ENCODE measurements at regions of chr20 and their contacts with region 1.

Region 1: DNA sequence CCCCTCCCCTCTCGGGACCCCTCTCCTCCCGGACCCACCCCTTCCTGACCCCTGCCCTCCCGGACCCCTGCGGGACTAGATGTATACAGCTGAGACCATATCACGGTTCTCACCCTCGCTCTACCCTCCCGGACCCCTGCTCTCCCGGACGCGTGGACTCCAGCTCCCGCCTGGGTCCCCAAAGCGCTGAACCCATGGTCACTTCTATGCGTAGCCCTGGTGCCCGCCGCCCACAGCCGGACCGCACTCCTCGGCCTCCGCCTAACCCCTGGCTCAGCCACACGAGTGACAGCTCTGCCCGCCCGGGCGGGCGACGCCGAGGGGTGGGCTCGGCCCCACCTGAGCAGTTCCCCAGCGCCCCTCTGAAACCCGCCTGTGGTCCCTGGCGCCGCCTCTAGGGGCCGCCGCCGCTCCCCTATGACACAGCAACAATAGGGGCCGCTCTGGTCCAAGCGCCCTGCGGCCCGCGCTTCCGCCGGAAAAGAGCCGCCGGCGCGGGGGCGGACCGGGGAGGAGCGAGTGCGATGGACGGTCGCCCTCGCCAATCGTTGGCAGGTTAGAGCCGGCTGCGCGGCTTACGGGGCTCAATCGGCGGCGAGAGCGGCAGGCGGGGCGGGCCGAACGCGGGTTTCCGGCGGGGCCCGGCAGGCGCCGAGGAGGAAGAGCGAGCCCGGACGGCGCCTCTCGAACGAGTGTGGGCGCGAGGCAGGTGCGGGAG is at the start of gene ADRM1:
- DNase-seq: peak; percentile 97
- H3K4me3 Mint-ChIP-seq: peak within 1 kb of the TSS; percentile 95
- H3K27ac Mint-ChIP-seq: peak within 1 kb of the TSS; percentile 99
- H3K4me1 Mint-ChIP-seq: peaks cover 31% of the 10 kb centered on the region
- H3K27me3 Mint-ChIP-seq: no peaks in the 10 kb centered on the region
- total RNA-seq, gene ADRM1: 90.1 to 91.0 TPM

Region 2: GRCh38 chr20:62043131-62043914 is 259.2 kb before region 1 on chr20:
- CTCF ChIA-PET with region 1: no interaction called
- POLR2A ChIA-PET with region 1: no interaction called
- DNase-seq: no peak
- H3K4me3 Mint-ChIP-seq: no peak overlapping the region
- H3K27ac Mint-ChIP-seq: no peak overlapping the region
- H3K4me1 Mint-ChIP-seq: peaks cover 5% of the 10 kb centered on the region
- H3K27me3 Mint-ChIP-seq: no peaks in the 10 kb centered on the region

Region 3: GRCh38 chr20:62386383-62387218 is 84.1 kb after region 1 on chr20 and contains the start of gene RPS21:
- CTCF ChIA-PET with region 1: interaction called, 21 read pairs
- POLR2A ChIA-PET with region 1: interaction called, 13 read pairs
- DNase-seq: peak; percentile 94
- H3K4me3 Mint-ChIP-seq: peak within 1 kb of the TSS; percentile 93
- H3K27ac Mint-ChIP-seq: peak within 1 kb of the TSS; percentile 88
- H3K4me1 Mint-ChIP-seq: peaks cover 57% of the 10 kb centered on the region
- H3K27me3 Mint-ChIP-seq: no peaks in the 10 kb centered on the region
- total RNA-seq, gene RPS21: 1,751 to 1,764 TPM

Region 4: GRCh38 chr20:62516345-62516744 is 213.8 kb after region 1 on chr20:
- CTCF ChIA-PET with region 1: no interaction called
- POLR2A ChIA-PET with region 1: no interaction called
- DNase-seq: no peak
- H3K4me3 Mint-ChIP-seq: no peak overlapping the region
- H3K27ac Mint-ChIP-seq: no peak overlapping the region
- H3K4me1 Mint-ChIP-seq: no peaks in the 10 kb centered on the region
- H3K27me3 Mint-ChIP-seq: peaks cover 18% of the 10 kb centered on the region

Measured in activated CD4-positive, alpha-beta memory T cell treated with anti-CD3 and anti-CD28 coated beads, Interleukin-2, amount 10 ng/mL, durations not matched to agents 7 days and 5 days (primary cell).